ENCODE measurements at regions of chr6 and their contacts with region 1.

Region 1: DNA sequence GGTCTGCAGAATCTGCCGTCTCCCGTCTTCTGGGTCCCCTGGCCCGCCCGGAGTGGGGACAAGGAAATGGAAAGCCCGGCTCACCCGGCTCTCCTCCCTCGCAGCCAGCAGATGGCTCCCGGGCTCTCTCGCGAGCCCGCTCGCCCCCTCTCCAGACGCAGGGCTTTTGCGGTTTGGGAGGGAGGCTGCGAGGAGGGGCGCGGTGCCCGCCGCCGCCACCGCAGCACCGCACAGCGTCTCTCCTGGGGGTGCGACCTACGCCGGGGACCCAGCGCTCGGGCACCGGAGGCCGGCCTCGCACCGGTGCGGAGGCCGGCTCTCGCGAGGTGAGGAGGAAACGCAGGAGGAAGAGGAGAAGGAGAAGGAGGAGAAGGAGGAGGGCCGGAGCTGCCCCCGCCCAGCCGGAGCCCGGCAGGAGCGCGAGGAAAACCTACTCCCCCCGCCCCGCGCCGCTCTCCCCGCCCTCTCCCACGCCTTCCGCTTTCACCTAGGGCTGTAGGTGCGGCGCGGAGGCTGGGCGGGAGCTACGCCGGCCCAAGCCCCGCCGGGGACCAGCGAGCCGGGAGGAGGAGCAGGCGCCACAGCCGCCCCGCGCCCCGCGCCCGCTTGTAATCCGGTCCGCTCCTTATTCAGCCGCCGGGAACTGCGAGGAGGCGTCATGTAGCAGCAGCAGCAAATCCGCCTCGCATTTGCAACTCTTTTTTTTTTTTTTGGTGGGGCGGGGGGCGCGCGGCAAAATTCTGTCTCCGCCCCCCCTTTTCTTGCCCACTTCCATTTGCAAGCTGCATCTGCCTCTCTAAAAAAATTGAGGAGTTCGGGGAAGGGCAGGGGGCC is at the start of gene CARMIL1:
- DNase-seq: peak; percentile 70
- H3K4me3 ChIP-seq: peak within 1 kb of the TSS; percentile 74 to 90 (median 87)
- H3K27ac ChIP-seq: peak within 1 kb of the TSS; percentile 18
- H3K4me1 ChIP-seq: peaks cover 10% of the 10 kb centered on the region
- H3K27me3 ChIP-seq: no peaks in the 10 kb centered on the region
- CTCF ChIP-seq: peak; percentile 50 to 84
- POLR2A ChIP-seq: no peak
- total RNA-seq, gene CARMIL1: 8.7 and 8.8 TPM in 2 replicates

Region 2: DNA sequence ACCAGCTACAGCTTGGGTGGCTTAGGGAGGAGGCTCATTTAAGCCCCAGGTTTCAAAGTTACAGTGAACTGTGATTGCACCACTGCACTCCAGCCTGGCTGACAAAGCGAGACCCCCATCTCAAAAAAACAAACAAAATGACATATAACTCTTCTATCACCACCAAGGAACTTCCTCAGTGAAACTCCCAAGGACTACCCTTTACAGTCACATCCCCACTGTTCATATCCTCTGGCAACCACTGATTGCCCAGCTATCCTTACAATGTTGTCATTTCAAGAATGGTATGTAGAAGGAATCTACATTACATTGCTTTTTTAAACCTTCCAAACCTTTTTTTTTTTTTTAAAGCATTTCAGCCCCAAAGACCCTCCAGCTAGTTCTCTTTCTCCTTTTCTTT is 123.0 kb before region 1 on chr6:
- CTCF ChIA-PET with region 1: no interaction called
- POLR2A ChIA-PET with region 1: no interaction called
- dilution Hi-C with region 1: no loop called
- intact Hi-C with region 1: no loop called
- DNase-seq: no peak
- H3K4me3 ChIP-seq: no peak overlapping the region
- H3K27ac ChIP-seq: no peak overlapping the region
- H3K4me1 ChIP-seq: no peaks in the 10 kb centered on the region
- H3K27me3 ChIP-seq: no peaks in the 10 kb centered on the region
- CTCF ChIP-seq: no peak
- POLR2A ChIP-seq: no peak

Region 3: DNA sequence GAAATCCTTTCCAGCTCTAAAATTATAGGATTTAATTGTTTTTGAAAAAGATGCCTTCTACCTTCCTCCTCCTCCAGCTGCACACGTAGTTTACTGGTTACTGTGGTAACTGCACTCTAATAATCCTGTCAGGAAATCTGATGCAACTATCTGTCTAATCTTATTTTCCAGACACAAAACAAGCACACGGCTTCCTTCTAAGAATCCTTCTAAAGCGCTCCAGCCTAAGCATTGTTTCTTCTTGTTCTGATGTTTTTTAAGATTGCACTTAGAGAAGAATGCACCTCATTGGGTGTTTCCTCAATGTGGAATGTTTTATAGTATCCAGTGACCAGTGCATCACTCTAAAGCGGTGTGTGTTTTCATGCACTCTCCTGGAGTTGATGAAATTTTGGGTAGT is 63.7 kb after region 1 on chr6:
- CTCF ChIA-PET with region 1: interaction called, 4 read pairs
- POLR2A ChIA-PET with region 1: interaction called, 3 read pairs
- dilution Hi-C with region 1: no loop called
- intact Hi-C with region 1: loop called (anchors 2 kb)
- DNase-seq: peak; percentile 63
- H3K4me3 ChIP-seq: no peak overlapping the region
- H3K27ac ChIP-seq: no peak overlapping the region
- H3K4me1 ChIP-seq: no peaks in the 10 kb centered on the region
- H3K27me3 ChIP-seq: no peaks in the 10 kb centered on the region
- CTCF ChIP-seq: no peak
- POLR2A ChIP-seq: no peak

Region 4: GRCh38 chr6:25556516-25556915 is 277.4 kb after region 1 on chr6:
- CTCF ChIA-PET with region 1: interaction called, 49 read pairs
- POLR2A ChIA-PET with region 1: no interaction called
- dilution Hi-C with region 1: no loop called
- intact Hi-C with region 1: loop called (anchors 1 kb)
- DNase-seq: peak; percentile 83
- H3K4me3 ChIP-seq: no peak overlapping the region
- H3K27ac ChIP-seq: no peak overlapping the region
- H3K4me1 ChIP-seq: no peaks in the 10 kb centered on the region
- H3K27me3 ChIP-seq: no peaks in the 10 kb centered on the region
- CTCF ChIP-seq: peak; percentile 73 to 85
- POLR2A ChIP-seq: no peak

Region 5: GRCh38 chr6:25564943-25565342 is 285.8 kb after region 1 on chr6:
- CTCF ChIA-PET with region 1: interaction called, 12 read pairs
- POLR2A ChIA-PET with region 1: no interaction called
- dilution Hi-C with region 1: no loop called
- intact Hi-C with region 1: no loop called
- DNase-seq: no peak
- H3K4me3 ChIP-seq: no peak overlapping the region
- H3K27ac ChIP-seq: no peak overlapping the region
- H3K4me1 ChIP-seq: no peaks in the 10 kb centered on the region
- H3K27me3 ChIP-seq: no peaks in the 10 kb centered on the region
- CTCF ChIP-seq: no peak
- POLR2A ChIP-seq: no peak

Region 6: DNA sequence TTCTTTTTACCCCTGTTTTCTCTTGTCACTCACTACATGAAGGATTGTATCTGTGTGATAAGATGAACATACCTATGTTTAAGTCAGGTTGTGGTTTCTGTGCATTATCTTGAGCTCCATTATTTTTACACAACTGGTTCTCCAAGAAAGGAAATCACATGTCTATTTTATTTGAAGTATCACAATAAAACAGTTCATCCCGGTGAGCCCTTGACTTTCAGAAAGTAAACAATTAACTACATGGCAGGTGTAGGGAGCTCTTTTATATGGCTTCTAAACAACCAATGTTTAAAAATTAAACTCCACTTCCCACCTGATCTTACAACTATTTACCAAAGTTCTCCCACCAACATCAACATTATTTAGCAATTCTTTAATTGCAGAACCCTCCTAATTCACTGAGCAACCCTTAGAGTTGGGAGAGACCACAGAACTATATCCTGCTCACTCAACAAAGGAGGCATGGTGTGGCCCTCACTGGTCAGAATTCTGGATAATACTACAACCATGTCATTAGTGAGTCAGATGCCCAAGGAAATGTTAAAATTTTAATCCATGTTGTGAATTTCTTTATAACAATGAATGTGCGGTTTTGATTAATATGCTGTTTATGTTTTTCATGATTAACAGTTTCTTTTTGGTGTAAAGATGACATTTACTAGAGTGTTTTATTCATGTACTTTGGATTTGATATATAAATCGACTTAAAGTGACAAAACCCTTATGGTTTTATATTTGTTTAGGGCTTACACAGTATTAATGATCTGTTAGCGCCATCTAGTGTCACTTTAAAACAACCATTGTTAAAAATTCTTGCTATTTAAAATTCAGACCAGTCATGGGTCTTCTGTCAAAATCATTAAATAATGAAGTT is 322.9 kb after region 1 on chr6:
- CTCF ChIA-PET with region 1: interaction called, 24 read pairs
- POLR2A ChIA-PET with region 1: no interaction called
- dilution Hi-C with region 1: no loop called
- intact Hi-C with region 1: loop called (anchors 1 kb)
- DNase-seq: peak; percentile 62
- H3K4me3 ChIP-seq: no peak overlapping the region
- H3K27ac ChIP-seq: no peak overlapping the region
- H3K4me1 ChIP-seq: no peaks in the 10 kb centered on the region
- H3K27me3 ChIP-seq: peaks cover 0 to 2% of the 10 kb centered on the region in 2 experiments
- CTCF ChIP-seq: peak; percentile 10 to 19
- POLR2A ChIP-seq: no peak